ENCODE measurements at regions of chr5 and their contacts with region 1.

Region 1: GRCh38 chr5:175464074-175464941 is 14.1 kb upstream of the SFXN1 start:
- DNase-seq: peak; percentile 84
- H3K4me3 Mint-ChIP-seq: no peak overlapping the region
- H3K27ac Mint-ChIP-seq: no peak overlapping the region
- H3K4me1 Mint-ChIP-seq: peaks cover 14% of the 10 kb centered on the region
- H3K27me3 Mint-ChIP-seq: no peaks in the 10 kb centered on the region

Region 2: DNA sequence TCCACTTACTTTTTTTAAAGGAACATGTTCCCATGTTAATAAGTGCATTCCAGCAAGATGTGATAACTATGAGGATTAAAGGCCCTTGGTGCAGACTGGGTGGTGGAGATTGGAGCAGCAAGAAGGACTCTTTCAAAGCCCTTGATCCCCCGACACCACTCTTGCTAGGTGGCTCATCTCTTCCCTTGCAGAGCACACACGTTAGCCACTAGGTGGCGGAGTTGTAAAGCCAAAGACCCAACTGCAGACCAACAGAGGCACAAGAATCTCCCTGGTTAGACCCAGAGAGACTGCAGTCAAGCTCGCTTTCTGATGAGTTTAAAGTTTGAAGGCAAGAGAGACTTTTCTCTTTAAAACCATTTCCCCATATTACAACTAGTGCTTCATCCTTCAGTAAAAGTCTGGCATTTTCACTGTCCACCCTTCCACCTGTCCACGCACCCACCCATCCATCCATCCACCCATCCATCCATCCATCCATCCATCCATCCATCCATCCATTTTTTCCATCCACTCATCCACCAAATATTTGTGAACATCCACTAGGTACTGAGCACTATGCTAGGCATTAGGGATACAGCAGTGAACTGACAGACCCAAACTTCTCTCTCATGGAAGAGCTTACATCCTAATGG is 513.0 kb before region 1 on chr5:
- CTCF ChIA-PET with region 1: interaction called, 18 read pairs
- POLR2A ChIA-PET with region 1: no interaction called
- intact Hi-C with region 1: no loop called
- DNase-seq: peak; percentile 71
- H3K4me3 Mint-ChIP-seq: no peak overlapping the region
- H3K27ac Mint-ChIP-seq: no peak overlapping the region
- H3K4me1 Mint-ChIP-seq: peaks cover 7% of the 10 kb centered on the region
- H3K27me3 Mint-ChIP-seq: peaks cover 9% of the 10 kb centered on the region

Region 3: DNA sequence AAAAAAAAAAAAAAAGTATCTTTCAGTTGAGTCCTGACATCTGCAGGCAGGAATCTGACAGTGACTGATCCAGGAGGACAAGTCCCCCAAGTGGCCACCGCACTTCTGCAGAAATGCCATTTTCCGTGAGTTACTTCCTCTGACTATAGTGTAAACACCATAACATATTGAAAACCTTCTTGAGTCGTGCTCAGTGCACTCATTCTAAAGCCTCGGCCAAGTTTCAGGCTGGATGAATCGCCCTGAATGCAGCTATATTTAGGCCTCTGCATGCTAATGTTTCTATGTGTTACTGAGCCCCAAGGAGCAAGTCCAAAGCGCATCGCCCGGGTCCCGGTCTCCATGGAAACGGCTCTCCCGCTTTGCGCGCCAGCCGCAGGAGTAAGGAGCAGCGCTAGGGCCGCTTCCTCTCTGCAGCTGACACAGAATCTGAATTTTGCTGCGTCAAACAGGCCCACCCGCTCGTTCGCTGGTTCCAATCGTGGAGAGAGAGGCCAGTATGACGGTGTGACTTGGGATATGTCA is 404.6 kb before region 1 on chr5:
- CTCF ChIA-PET with region 1: interaction called, 4 read pairs
- POLR2A ChIA-PET with region 1: no interaction called
- intact Hi-C with region 1: loop called (anchors 10 kb)
- DNase-seq: peak; percentile 70
- H3K4me3 Mint-ChIP-seq: peak overlapping the region; percentile 52
- H3K27ac Mint-ChIP-seq: peak overlapping the region; percentile 28
- H3K4me1 Mint-ChIP-seq: peaks cover 17% of the 10 kb centered on the region
- H3K27me3 Mint-ChIP-seq: no peaks in the 10 kb centered on the region

Region 4: GRCh38 chr5:175246242-175246888 is 217.9 kb before region 1 on chr5:
- CTCF ChIA-PET with region 1: no interaction called
- POLR2A ChIA-PET with region 1: no interaction called
- intact Hi-C with region 1: loop called (anchors 10 kb)
- DNase-seq: peak; percentile 63
- H3K4me3 Mint-ChIP-seq: no peak overlapping the region
- H3K27ac Mint-ChIP-seq: no peak overlapping the region
- H3K4me1 Mint-ChIP-seq: peaks cover 19% of the 10 kb centered on the region
- H3K27me3 Mint-ChIP-seq: peaks cover 26% of the 10 kb centered on the region

Region 5: DNA sequence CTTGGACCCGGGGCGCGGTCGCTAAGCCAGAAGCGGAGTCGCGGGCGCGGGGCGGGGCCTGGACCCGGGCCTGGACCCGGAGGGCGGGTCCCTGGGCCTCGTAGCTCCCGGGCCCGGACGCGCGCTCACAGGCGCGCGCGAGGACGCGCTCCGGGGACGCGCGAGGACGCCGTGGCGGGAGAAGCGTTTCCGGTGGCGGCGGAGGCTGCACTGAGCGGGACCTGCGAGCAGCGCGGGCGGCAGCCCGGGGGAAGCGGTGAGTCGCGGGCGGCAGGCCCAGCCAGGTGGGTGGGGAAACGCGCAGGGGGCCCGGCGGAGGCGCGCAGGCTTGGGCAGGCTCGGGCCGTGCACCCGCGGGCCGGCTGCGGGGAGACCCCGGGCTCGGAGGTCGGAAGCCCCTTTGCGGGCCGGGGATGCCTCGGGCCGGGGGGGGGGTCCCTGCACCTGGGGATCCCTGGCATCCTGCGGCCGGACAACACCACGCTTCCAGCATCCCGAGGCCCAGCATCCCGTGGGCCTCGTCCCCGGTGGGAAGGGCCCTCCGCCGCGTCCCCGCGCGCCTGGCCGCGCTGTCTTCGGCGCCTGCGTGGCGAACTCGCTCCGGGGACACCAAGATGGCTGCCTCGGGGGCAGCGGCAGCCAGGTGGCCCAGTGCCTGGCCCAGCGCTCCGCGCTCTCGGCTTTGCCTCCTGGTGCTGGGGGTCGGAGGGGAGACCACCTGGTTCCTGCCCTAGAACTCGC is 14.2 kb after region 1 on chr5 and contains the start of gene SFXN1:
- CTCF ChIA-PET with region 1: interaction called, 66 read pairs
- POLR2A ChIA-PET with region 1: interaction called, 4 read pairs
- intact Hi-C with region 1: no loop called
- DNase-seq: peak; percentile 90
- H3K4me3 Mint-ChIP-seq: peak within 1 kb of the TSS; percentile 96
- H3K27ac Mint-ChIP-seq: peak within 1 kb of the TSS; percentile 96
- H3K4me1 Mint-ChIP-seq: peaks cover 46% of the 10 kb centered on the region
- H3K27me3 Mint-ChIP-seq: no peaks in the 10 kb centered on the region
- total RNA-seq, gene SFXN1: 298 to 300 TPM

Region 6: GRCh38 chr5:175718401-175719108 is 254.2 kb after region 1 on chr5:
- CTCF ChIA-PET with region 1: interaction called, 11 read pairs
- POLR2A ChIA-PET with region 1: no interaction called
- intact Hi-C with region 1: no loop called
- DNase-seq: peak; percentile 84
- H3K4me3 Mint-ChIP-seq: no peak overlapping the region
- H3K27ac Mint-ChIP-seq: no peak overlapping the region
- H3K4me1 Mint-ChIP-seq: peaks cover 4% of the 10 kb centered on the region
- H3K27me3 Mint-ChIP-seq: no peaks in the 10 kb centered on the region

Measured in activated CD4-positive, alpha-beta memory T cell treated with anti-CD3 and anti-CD28 coated beads for 36 hours (primary cell).